ENCODE measurements at regions of chr10 and their contacts with region 1.

Region 1: DNA sequence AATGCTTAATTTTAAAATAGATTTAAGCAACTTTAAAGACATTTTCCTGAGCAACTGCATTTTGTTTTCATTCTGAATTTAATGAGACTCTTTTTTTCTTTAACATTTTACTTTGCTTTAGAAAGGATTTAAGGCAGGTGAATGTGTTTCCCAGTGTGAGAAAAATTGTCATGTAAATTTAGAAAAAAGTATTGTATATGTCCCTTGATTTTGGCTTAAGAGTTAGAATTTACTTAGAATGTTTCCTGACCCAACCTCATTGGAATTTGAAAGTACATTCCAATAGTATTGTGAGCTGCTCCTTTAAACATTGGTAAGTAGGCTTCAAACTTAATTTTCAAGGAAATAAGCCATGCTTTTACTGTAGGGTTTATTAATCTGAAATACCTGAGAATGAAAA is 110.2 kb downstream of the PTEN start:
- DNase-seq: no peak
- H3K4me3 ChIP-seq: no peak overlapping the region
- H3K27ac ChIP-seq: no peak overlapping the region
- H3K4me1 ChIP-seq: peaks cover 0 to 3% of the 10 kb centered on the region in 2 donors
- H3K27me3 ChIP-seq: no peaks in the 10 kb centered on the region
- CTCF ChIP-seq: no peak

Region 2: GRCh38 chr10:88012641-88013040 is 39.0 kb after region 1 on chr10:
- intact Hi-C with region 1: loop called (anchors 2 kb)
- DNase-seq: no peak
- H3K4me3 ChIP-seq: no peak overlapping the region
- H3K27ac ChIP-seq: peak overlapping the region; percentile 16 to 67
- H3K4me1 ChIP-seq: peaks cover 0 to 5% of the 10 kb centered on the region in 2 donors
- H3K27me3 ChIP-seq: no peaks in the 10 kb centered on the region
- CTCF ChIP-seq: no peak